ENCODE measurements at regions of chr6 and their contacts with region 1.

Region 1: DNA sequence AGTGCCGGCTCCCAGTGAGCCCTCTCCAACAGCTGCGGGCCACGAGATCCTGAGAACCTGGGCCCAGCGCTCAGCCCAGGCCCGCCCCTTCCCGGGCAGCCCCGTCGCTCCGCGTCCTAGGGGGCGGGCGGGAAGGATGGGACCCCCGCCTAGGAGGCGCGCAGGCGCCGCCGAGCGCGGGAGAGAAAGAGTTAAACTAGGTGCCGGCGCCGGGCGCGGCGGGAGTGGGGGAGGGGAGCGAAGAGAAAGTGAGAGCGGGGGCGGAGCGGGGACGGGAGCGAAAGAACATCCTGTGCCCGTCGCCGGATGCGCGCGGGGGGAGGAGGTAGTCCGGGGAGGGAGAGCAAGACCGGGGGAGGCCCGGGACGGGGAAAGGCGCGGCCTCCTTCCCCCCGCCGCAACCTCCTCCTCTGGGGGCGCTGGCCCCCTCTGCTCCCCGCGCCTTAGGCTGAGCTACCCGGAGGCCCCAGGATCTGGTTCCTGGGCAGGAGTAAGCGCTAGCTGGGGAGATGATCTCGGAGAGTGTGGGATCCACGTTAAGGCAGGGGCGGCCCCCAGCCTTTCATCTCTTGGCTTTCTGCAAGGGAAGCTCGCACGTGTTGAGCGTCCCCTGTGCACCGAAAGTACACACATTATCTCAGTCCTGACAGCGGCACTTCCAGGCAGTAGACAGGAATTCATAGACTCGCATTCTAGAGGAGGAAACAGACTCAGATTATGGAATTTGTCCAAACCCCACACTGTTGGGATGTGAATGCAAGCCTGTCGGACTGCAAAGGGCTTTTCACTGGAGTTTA is 4.9 kb upstream of the ARMC12 start:
- DNase-seq: peak; percentile 83
- ATAC-seq: peak; percentile 68
- H3K4me3 ChIP-seq: peak overlapping the region; percentile 70
- H3K27ac ChIP-seq: peak overlapping the region; percentile 88
- H3K4me1 ChIP-seq: peaks cover 8% of the 10 kb centered on the region
- H3K27me3 ChIP-seq: no peaks in the 10 kb centered on the region
- CTCF ChIP-seq: no peak
- POLR2A ChIP-seq: no peak
- RAD21 ChIP-seq: no peak

Region 2: DNA sequence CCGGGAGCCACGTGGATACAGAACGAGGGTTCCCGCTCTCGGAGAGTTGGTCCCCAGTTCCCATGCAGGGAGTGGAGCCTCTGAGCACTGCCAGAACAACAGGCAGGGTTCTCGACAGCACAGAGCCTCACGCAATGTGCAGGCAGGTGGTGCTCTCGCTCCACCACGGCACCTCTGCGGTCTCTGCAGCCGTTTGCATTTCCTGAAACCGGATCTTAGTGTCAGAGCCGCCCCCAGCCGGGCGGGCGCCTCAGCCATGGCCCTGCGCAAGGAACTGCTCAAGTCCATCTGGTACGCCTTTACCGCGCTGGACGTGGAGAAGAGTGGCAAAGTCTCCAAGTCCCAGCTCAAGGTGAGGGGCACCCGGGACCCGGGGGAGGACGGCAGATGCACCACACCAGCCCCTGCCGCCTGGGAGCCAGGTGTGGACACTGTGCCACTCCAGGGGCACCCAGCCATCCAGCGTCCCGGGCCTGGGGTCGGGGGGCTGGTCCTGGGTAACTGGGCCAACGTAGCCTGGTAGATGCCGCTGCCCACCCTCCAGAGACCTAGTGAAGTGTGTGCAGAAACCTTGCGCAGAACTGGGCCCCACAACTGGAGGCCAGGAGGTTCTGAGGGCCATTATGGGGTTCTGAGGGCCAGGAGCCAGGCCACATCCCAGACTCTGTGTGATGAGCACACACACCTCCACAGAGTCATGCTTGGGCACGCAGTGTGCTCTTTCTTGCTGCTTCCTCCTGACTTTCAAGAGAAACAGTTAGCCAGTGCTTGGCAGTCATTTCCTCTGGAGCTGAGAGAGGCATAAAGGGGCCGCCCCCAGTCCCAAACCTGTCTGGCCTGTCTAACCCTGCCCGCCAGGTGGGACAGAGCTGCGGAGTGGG is 434.1 kb before region 1 on chr6 and contains the start of gene DEF6:
- CTCF ChIA-PET with region 1: no interaction called
- POLR2A ChIA-PET with region 1: no interaction called
- dilution Hi-C with region 1: no loop called
- in situ Hi-C with region 1: loop called (anchors 25 kb)
- intact Hi-C with region 1: no loop called
- DNase-seq: peak; percentile 82
- ATAC-seq: peak; percentile 94
- H3K4me3 ChIP-seq: peak within 1 kb of the TSS; percentile 15; the same call in 1 of the 2 replicates
- H3K27ac ChIP-seq: no peak within 1 kb of the TSS
- H3K4me1 ChIP-seq: peaks cover 4% of the 10 kb centered on the region; the same call in 1 of the 2 replicates
- H3K27me3 ChIP-seq: no peaks in the 10 kb centered on the region
- CTCF ChIP-seq: peak; percentile 75
- POLR2A ChIP-seq: no peak
- RAD21 ChIP-seq: peak; percentile 87
- total RNA-seq, gene DEF6: 1.9 and 2.5 TPM in 2 replicates

Region 3: GRCh38 chr6:35688581-35689322 is 43.2 kb before region 1 on chr6 and contains the start of gene FKBP5:
- CTCF ChIA-PET with region 1: no interaction called
- POLR2A ChIA-PET with region 1: no interaction called
- dilution Hi-C with region 1: no loop called
- in situ Hi-C with region 1: loop called (anchors 5 kb)
- intact Hi-C with region 1: loop called (anchors 2 kb)
- DNase-seq: peak; percentile 80
- ATAC-seq: peak; percentile 99
- H3K4me3 ChIP-seq: peak within 1 kb of the TSS; percentile 59
- H3K27ac ChIP-seq: peak within 1 kb of the TSS; percentile 13; the same call in 1 of the 2 replicates
- H3K4me1 ChIP-seq: peaks cover 2% of the 10 kb centered on the region; the same call in 1 of the 2 replicates
- H3K27me3 ChIP-seq: no peaks in the 10 kb centered on the region
- CTCF ChIP-seq: no peak
- POLR2A ChIP-seq: peak; percentile 70
- RAD21 ChIP-seq: no peak
- total RNA-seq, gene FKBP5: 7.0 and 10.0 TPM in 2 replicates

Region 4: DNA sequence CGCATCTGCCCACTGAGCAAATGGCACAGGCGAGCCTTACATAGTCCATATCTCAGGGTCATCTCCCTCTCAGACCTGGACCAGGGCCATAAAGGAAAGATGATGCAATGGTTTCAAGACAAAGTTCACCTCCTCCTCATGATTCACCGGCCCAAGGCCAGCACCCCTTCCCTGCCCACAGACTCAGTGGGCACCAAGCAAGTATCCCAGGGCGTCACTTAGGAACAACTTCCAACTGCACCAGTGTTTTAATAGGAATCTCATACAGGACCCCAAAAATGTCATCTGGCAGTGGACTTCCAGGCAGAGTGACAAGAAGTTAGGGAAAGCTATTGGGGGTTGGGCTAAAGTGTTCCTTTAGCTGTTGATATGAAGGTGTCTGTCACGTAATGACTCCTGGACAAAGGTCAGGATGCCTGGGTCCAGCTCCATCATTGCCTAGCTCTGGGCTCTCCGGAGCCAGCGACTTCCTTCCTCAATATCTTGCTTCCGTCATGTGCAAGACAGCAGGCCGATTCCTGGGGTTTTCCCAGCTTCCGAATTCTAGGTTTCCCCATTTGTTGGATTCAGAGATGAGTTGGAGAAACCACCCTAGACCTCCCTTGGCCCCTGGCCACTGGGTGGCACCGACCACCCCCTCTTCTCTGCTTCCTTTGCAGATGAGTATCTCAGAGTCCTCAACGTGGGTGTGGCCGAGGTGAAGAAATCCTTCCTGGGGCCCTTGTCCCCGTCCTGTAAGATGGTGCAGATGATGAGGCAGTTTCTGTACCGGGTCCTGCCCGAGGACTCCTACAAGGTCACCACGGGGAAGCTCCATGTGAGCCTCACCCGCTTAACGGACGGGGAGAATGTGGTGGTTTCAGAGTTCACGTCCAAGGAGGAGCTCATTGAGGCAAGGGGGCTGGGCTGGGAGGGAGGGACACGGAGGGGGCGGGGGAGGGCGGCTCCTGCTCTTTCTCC is 559.0 kb after region 1 on chr6:
- CTCF ChIA-PET with region 1: no interaction called
- POLR2A ChIA-PET with region 1: no interaction called
- dilution Hi-C with region 1: no loop called
- in situ Hi-C with region 1: no loop called
- intact Hi-C with region 1: no loop called
- DNase-seq: no peak
- ATAC-seq: no peak
- H3K4me3 ChIP-seq: no peak overlapping the region
- H3K27ac ChIP-seq: no peak overlapping the region
- H3K4me1 ChIP-seq: no peaks in the 10 kb centered on the region
- H3K27me3 ChIP-seq: peaks cover 58% of the 10 kb centered on the region
- CTCF ChIP-seq: no peak
- POLR2A ChIP-seq: no peak
- RAD21 ChIP-seq: no peak

Measured in IMR-90 (cell line).